ENCODE measurements at regions of chr6 and their contacts with region 1.

Region 1: DNA sequence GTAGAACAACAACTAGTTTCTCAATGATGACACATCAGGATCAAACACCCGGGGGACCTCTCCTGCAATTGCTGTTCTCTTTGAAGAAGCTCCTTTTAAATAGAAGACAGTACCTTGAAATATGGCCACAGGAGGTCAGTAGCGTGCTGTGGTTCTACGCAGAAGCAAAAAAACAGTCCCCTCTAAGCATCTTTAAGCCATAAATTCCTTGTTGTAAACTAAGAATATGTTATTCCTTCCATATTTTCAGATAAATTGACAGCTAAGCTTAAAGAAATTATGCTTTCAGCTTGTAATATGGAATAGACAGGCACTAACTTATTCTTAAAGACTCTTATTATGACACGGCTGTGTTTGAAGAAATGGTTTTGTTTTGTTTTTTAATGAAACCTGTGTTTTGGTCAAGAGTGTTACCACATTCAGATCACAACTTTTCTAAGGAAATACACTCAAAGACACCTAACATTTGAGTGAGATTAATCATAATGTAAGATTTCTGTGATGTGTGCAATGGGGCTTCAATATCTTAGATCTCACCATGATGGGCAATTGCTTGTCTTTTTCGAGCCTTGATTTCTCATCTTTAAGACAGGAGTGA is 49.7 kb upstream of the IL20RA start:
- DNase-seq: peak in 8 of 9 donors; percentile 17 to 56 (median 40)
- ATAC-seq: peak; percentile 80
- H3K4me3 ChIP-seq: no peak overlapping the region
- H3K4me3 Mint-ChIP-seq: peak overlapping the region in 1 of 10 donors; percentile 33
- H3K27ac ChIP-seq: no peak overlapping the region
- H3K27ac Mint-ChIP-seq: peak overlapping the region in 1 of 9 donors; percentile 11
- H3K4me1 ChIP-seq: peaks cover 0 to 3% of the 10 kb centered on the region in 2 donors
- H3K4me1 Mint-ChIP-seq: peaks cover 0 to 44% (median 0%) of the 10 kb centered on the region in 7 donors
- H3K27me3 ChIP-seq: no peaks in the 10 kb centered on the region
- H3K27me3 Mint-ChIP-seq: peaks cover 0 to 10% (median 0%) of the 10 kb centered on the region in 5 donors

Region 2: GRCh38 chr6:136812174-136812573 is 282.3 kb before region 1 on chr6:
- CTCF ChIA-PET with region 1: no interaction called
- POLR2A ChIA-PET with region 1: no interaction called
- intact Hi-C with region 1: no loop called
- DNase-seq: no peak
- ATAC-seq: no peak
- H3K4me3 ChIP-seq: no peak overlapping the region
- H3K4me3 Mint-ChIP-seq: no peak overlapping the region
- H3K27ac ChIP-seq: no peak overlapping the region
- H3K27ac Mint-ChIP-seq: no peak overlapping the region
- H3K4me1 ChIP-seq: no peaks in the 10 kb centered on the region
- H3K4me1 Mint-ChIP-seq: peaks cover 0 to 8% (median 6%) of the 10 kb centered on the region in 7 donors
- H3K27me3 ChIP-seq: no peaks in the 10 kb centered on the region
- H3K27me3 Mint-ChIP-seq: peaks cover 4 to 14% (median 7%) of the 10 kb centered on the region in 5 donors

Region 3: DNA sequence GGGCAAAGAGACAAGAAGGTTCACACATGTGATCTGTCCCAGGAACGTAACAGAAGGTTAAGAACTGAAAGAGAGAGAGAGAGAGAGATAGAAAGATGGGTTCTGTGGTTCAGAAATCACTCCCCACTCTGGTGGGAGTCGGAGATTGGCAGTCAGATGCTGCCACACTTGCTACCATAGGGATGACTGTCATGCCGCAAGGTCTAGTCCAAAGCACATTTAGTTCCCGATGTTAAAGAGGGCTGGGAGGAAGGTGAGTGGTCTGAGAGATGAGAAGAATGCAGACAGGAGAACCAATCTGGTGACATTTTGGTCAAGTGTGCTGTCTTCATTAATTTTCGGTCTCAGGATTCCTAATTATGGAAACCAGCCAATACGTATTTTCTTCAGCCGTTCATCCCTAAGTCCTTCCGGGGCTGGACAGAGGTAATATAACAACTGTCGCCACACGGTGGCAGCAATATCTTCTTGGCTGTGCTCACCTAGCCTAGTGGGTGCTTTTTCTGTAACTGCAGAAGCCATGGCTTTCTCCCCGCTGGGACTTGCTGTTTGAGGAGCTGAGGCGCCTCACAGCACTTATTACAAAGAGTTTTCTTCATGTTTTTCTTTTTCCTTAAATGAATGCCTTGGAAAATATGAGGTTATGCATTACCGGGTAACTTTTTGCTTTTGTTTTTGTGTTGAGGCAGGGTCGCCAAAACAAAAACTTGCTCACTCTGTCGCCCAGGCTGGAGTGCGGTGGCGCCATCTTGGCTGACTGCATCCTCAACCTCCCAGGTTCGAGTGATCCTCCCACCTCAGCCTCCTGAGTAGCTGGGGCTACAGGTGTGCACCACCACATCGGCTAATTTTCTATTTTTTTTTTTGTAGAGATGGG is 126.4 kb before region 1 on chr6:
- CTCF ChIA-PET with region 1: interaction called, 3 read pairs
- POLR2A ChIA-PET with region 1: no interaction called
- intact Hi-C with region 1: loop called in 1 of 2 experiments (anchors 1 kb)
- DNase-seq: peak in 8 of 9 donors; percentile 7 to 48 (median 30)
- ATAC-seq: peak; percentile 87
- H3K4me3 ChIP-seq: no peak overlapping the region
- H3K4me3 Mint-ChIP-seq: no peak overlapping the region
- H3K27ac ChIP-seq: no peak overlapping the region
- H3K27ac Mint-ChIP-seq: no peak overlapping the region
- H3K4me1 ChIP-seq: no peaks in the 10 kb centered on the region
- H3K4me1 Mint-ChIP-seq: peaks cover 0 to 9% (median 0%) of the 10 kb centered on the region in 7 donors
- H3K27me3 ChIP-seq: no peaks in the 10 kb centered on the region
- H3K27me3 Mint-ChIP-seq: peaks cover 29 to 59% (median 47%) of the 10 kb centered on the region in 5 donors

Region 4: DNA sequence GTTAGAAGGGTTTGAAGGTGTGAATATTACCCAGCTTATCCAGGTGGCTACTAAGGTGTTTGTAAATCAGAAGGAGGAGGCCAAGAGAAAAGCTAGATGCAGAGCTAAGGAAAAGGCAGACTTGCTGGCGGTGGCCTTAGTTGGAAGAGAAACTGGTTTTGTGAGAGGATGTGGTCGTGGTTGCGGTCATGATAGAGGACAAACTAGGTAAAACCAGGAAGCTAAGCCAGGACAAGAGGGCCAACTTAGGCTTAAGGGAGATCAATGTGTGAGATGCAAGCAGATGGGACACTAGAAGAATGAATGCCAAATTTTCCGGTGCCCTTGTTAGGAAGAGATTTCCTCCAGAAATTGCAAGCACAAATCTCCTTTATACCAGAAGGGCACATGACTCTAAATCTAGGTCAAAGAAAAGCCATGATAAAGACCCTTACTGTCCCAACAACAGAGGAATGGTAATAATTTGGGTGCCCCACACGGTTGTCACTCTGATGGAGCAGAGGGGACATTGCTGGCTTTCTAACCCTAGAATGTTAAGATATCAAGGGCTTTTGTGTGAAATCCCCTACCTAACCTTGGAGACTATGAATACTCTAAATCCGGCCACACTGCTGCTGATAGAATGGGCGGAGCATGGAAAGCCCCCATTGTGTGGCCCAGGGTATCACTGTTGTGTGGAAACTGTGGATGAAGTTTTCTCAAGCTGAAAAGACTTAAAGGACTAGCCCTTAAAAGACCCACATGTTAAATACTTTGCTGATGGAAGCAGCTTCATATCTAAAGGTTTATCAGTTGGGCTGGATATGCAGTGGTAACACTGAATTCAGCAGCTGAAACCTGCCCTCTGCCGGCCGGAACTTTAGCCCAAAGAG is 71.1 kb after region 1 on chr6:
- CTCF ChIA-PET with region 1: no interaction called
- POLR2A ChIA-PET with region 1: no interaction called
- intact Hi-C with region 1: loop called in 1 of 2 experiments (anchors 1 kb)
- DNase-seq: peak in 1 of 9 donors; percentile 38
- ATAC-seq: peak; percentile 68
- H3K4me3 ChIP-seq: no peak overlapping the region
- H3K4me3 Mint-ChIP-seq: peak overlapping the region in 4 of 10 donors; percentile 3 to 74 (median 38)
- H3K27ac ChIP-seq: no peak overlapping the region
- H3K27ac Mint-ChIP-seq: peak overlapping the region in 2 of 9 donors; percentile 62 to 79
- H3K4me1 ChIP-seq: peaks cover 0 to 19% of the 10 kb centered on the region in 2 donors
- H3K4me1 Mint-ChIP-seq: peaks cover 12 to 53% (median 18%) of the 10 kb centered on the region in 7 donors
- H3K27me3 ChIP-seq: peaks cover 0 to 3% of the 10 kb centered on the region in 2 donors
- H3K27me3 Mint-ChIP-seq: peaks cover 4 to 25% (median 9%) of the 10 kb centered on the region in 5 donors

Region 5: DNA sequence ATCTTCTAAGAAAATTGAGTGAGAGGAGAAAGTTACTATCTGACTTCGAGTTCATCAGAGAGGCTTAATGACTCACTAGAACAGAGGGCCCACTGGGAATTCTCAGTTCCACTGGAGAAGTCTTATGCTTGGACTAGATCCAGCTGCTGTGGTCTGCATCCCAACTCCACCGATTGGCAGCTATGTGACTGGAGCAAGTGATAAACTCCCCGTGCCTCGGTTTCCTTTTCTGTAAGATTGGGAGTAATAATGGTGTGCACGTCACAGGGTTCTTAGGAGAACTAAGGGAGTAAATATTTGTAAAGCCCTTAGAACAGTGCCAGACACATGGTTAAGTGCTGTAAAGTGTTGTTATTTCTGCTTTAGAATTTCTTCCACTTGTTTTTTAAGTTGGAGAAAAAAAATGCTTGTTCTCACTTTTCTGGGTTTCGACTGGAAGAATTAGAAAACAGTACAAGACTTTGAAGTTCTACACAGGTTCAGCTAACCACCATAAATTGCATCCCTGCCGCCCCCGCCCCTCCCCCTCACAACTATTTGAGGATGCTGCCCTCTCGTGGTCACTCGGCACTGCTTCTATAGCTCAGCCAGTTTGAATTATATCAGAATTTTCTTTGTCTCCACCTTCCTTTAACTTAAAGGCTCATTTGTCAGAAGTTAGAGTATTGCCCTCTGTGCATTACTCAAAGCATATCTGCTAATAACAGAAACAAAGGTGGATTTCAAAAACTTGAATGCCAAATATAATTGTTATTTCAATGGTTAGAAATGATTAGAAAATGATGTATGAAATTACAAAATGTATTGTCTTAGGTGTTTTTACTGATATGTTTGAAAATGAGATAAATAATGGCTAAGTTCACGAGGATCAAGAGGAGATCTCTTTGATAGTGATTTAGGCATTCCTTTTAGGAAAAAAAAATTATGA is 219.7 kb after region 1 on chr6:
- CTCF ChIA-PET with region 1: interaction called, 22 read pairs
- POLR2A ChIA-PET with region 1: no interaction called
- intact Hi-C with region 1: loop called (anchors 1 kb)
- DNase-seq: peak; percentile 9 to 57 (median 51)
- ATAC-seq: peak; percentile 90
- H3K4me3 ChIP-seq: no peak overlapping the region
- H3K4me3 Mint-ChIP-seq: no peak overlapping the region
- H3K27ac ChIP-seq: no peak overlapping the region
- H3K27ac Mint-ChIP-seq: no peak overlapping the region
- H3K4me1 ChIP-seq: no peaks in the 10 kb centered on the region
- H3K4me1 Mint-ChIP-seq: peaks cover 0 to 10% (median 3%) of the 10 kb centered on the region in 7 donors
- H3K27me3 ChIP-seq: no peaks in the 10 kb centered on the region
- H3K27me3 Mint-ChIP-seq: peaks cover 0 to 22% (median 0%) of the 10 kb centered on the region in 5 donors

Region 6: GRCh38 chr6:137475103-137475502 is 380.6 kb after region 1 on chr6:
- CTCF ChIA-PET with region 1: no interaction called
- POLR2A ChIA-PET with region 1: no interaction called
- intact Hi-C with region 1: loop called in 1 of 2 experiments (anchors 10 kb)
- DNase-seq: no peak
- ATAC-seq: no peak
- H3K4me3 ChIP-seq: no peak overlapping the region
- H3K4me3 Mint-ChIP-seq: no peak overlapping the region
- H3K27ac ChIP-seq: no peak overlapping the region
- H3K27ac Mint-ChIP-seq: no peak overlapping the region
- H3K4me1 ChIP-seq: no peaks in the 10 kb centered on the region
- H3K4me1 Mint-ChIP-seq: no peaks in the 10 kb centered on the region
- H3K27me3 ChIP-seq: peaks cover 0 to 4% of the 10 kb centered on the region in 2 donors
- H3K27me3 Mint-ChIP-seq: peaks cover 15 to 62% (median 27%) of the 10 kb centered on the region in 5 donors